Activated naive CD4-positive, alpha-beta T cell treated with anti-CD3 and anti-CD28 coated beads, Interleukin-2, amount 10 ng/mL, durations not matched to agents 7 days and 5 days (primary cell): ENCODE measurements at regions of chr22 and their contacts with region 1.

Region 1: DNA sequence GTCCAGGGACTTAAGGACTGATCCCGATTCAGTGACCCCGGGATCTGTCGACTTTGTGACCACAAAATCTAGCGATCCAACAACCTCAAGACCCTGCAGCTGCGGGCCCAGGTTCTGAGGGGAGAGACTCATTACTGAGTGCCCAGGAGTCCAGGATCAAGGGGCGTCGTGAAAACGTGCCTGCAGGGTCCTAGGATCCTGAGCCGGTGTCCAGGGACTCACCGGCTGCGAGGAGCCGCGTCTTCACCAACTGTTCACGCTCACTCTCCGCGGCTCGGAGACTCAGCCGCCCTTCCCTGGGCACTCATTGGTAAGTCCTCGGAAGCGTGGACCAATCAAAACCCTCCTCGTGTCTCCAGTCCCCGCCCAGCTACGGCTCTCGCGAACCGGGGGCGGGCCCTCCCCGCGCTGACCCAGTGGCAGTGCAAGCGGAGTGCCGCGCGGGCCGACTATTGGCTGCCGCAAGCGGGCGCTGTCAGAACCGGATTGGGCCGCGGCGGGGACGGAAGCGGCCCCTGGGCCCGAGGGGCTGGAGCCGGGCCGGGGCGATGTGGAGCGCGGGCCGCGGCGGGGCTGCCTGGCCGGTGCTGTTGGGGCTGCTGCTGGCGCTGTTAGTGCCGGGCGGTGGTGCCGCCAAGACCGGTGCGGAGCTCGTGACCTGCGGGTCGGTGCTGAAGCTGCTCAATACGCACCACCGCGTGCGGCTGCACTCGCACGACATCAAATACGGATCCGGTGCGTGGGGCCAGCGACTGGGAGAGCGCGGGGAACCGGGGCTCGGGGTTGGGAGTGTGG is at the start of gene SDF2L1:
- DNase-seq: peak; percentile 99
- H3K4me3 Mint-ChIP-seq: peak within 1 kb of the TSS; percentile 92
- H3K27ac Mint-ChIP-seq: peak within 1 kb of the TSS; percentile 94
- H3K4me1 Mint-ChIP-seq: peaks cover 33% of the 10 kb centered on the region
- H3K27me3 Mint-ChIP-seq: peaks cover 10% of the 10 kb centered on the region

Region 2: GRCh38 chr22:21624120-21624879 is 17.7 kb before region 1 on chr22:
- CTCF ChIA-PET with region 1: interaction called, 104 read pairs
- DNase-seq: peak; percentile 56
- H3K4me3 Mint-ChIP-seq: no peak overlapping the region
- H3K27ac Mint-ChIP-seq: peak overlapping the region; percentile 49
- H3K4me1 Mint-ChIP-seq: peaks cover 21% of the 10 kb centered on the region
- H3K27me3 Mint-ChIP-seq: no peaks in the 10 kb centered on the region

Region 3: GRCh38 chr22:21629262-21630149 is 12.5 kb before region 1 on chr22 and contains the start of gene YDJC:
- CTCF ChIA-PET with region 1: interaction called, 104 read pairs
- DNase-seq: peak; percentile 96
- H3K4me3 Mint-ChIP-seq: peak within 1 kb of the TSS; percentile 86
- H3K27ac Mint-ChIP-seq: peak within 1 kb of the TSS; percentile 94
- H3K4me1 Mint-ChIP-seq: peaks cover 35% of the 10 kb centered on the region
- H3K27me3 Mint-ChIP-seq: peaks cover 3% of the 10 kb centered on the region

Region 4: DNA sequence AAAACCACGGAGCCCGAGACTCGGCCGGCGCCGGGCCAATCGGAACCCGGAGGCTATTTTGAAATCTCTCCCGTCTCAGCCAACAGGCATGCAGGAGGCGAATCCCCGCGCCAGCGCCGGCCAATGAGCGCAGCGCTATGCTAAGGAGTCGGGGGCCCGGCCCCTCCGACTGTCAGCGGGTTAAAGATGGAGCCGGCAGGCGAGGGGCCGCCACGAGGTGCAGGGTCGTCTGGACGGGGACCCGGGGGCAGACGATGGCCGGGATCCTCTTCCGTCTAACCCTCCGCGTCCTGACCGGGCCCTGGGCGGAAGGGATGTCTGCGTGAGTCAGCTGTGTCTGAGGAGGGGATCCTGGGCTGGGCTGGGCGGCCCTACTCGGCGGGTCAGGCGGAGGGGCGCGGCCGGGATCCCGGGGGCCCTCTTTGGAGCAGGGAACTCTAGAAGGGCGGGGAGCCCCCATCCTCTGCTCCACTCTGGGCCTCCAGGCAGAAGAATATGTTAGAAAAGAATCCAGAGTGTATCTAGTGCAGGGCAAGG is 10.1 kb after region 1 on chr22:
- CTCF ChIA-PET with region 1: interaction called, 19 read pairs
- DNase-seq: peak; percentile 95
- H3K4me3 Mint-ChIP-seq: peak overlapping the region; percentile 93
- H3K27ac Mint-ChIP-seq: peak overlapping the region; percentile 89
- H3K4me1 Mint-ChIP-seq: peaks cover 40% of the 10 kb centered on the region
- H3K27me3 Mint-ChIP-seq: peaks cover 3% of the 10 kb centered on the region

Region 5: GRCh38 chr22:21657361-21658032 is 15.5 kb after region 1 on chr22:
- CTCF ChIA-PET with region 1: interaction called, 19 read pairs
- DNase-seq: peak; percentile 90
- H3K4me3 Mint-ChIP-seq: peak overlapping the region; percentile 90
- H3K27ac Mint-ChIP-seq: peak overlapping the region; percentile 91
- H3K4me1 Mint-ChIP-seq: peaks cover 29% of the 10 kb centered on the region
- H3K27me3 Mint-ChIP-seq: peaks cover 15% of the 10 kb centered on the region

Region 6: DNA sequence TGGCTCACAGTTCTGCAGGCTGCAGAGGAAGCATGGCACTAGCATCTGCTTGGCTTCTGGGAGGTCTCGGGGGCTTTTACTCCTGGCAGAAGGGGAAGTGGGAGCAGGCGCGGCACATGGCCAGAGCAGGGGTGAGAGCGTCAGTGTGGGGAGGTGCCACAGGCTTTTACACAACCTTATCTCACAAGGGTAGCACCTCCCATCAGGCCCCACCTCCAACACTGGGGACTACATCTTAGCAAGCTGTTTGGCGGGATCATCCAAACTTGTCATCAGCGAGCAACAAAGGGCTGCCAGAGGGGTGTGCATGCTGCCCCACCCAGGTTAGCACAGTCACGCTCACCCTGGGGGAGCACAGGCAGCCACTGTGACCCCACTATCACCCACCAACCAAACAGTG is 112.5 kb after region 1 on chr22:
- CTCF ChIA-PET with region 1: no interaction called
- DNase-seq: no peak
- H3K4me3 Mint-ChIP-seq: no peak overlapping the region
- H3K27ac Mint-ChIP-seq: no peak overlapping the region
- H3K4me1 Mint-ChIP-seq: no peaks in the 10 kb centered on the region
- H3K27me3 Mint-ChIP-seq: no peaks in the 10 kb centered on the region